Mammary epithelial cell (primary cell): ENCODE measurements at regions of chr3 and their contacts with region 1.

Region 1: GRCh38 chr3:80187981-80188380 is 420.2 kb upstream of the ROBO1 start:
- DNase-seq: no peak
- H3K4me3 ChIP-seq: no peak overlapping the region
- H3K27ac ChIP-seq: no peak overlapping the region
- H3K4me1 ChIP-seq: no peaks in the 10 kb centered on the region
- H3K27me3 ChIP-seq: no peaks in the 10 kb centered on the region
- CTCF ChIP-seq: no peak

Region 2: DNA sequence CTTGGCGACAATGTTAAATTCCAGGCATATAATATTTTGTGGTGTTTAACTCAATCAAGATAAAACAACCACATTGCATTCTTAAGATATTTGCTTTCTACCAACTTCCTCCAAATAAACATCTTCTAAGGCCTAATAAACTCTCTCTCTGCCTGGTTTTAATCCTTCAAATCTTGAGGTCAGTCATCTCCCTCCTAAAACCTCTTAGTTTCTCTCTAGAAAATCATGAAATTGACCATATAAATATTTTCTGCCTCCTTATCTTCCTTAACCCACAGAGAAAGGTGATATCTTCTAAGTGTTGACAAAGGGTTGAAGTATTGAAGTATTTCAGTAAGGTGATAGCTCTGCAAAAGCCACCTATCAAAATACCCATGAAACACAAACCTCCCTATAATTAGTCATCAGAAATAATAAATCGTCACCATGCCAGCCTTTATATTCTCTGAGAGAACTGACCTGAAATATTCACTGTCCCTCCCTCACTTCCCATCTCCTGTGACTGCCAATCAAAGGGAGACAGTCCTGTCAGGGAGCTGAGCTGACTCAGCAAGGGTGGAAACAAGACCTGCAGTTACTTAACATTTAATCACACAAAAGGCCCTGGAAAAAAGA is 1681.3 kb before region 1 on chr3:
- CTCF ChIA-PET with region 1: no interaction called
- dilution Hi-C with region 1: no loop called
- in situ Hi-C with region 1: no loop called
- intact Hi-C with region 1: no loop called
- DNase-seq: peak; percentile 29
- H3K4me3 ChIP-seq: no peak overlapping the region
- H3K27ac ChIP-seq: peak overlapping the region; percentile 9
- H3K4me1 ChIP-seq: peaks cover 12% of the 10 kb centered on the region
- H3K27me3 ChIP-seq: no peaks in the 10 kb centered on the region
- CTCF ChIP-seq: no peak

Region 3: GRCh38 chr3:80153866-80154265 is 34.1 kb before region 1 on chr3:
- CTCF ChIA-PET with region 1: no interaction called
- dilution Hi-C with region 1: loop called (anchors 5 kb)
- in situ Hi-C with region 1: no loop called
- intact Hi-C with region 1: no loop called
- DNase-seq: no peak
- H3K4me3 ChIP-seq: no peak overlapping the region
- H3K27ac ChIP-seq: no peak overlapping the region
- H3K4me1 ChIP-seq: no peaks in the 10 kb centered on the region
- H3K27me3 ChIP-seq: no peaks in the 10 kb centered on the region
- CTCF ChIP-seq: no peak